ENCODE measurements at regions of chr19 and their contacts with region 1.

Region 1: GRCh38 chr19:6048808-6049405 is 61.4 kb downstream of the RFX2 start:
- DNase-seq: no peak
- H3K4me3 ChIP-seq: no peak overlapping the region
- H3K27ac ChIP-seq: no peak overlapping the region
- H3K27me3 ChIP-seq: no peaks in the 10 kb centered on the region
- CTCF ChIP-seq: peak; percentile 95

Region 2: GRCh38 chr19:5661451-5661873 is 387.4 kb before region 1 on chr19:
- CTCF ChIA-PET with region 1: interaction called, 10 read pairs
- POLR2A ChIA-PET with region 1: no interaction called
- DNase-seq: no peak
- H3K4me3 ChIP-seq: no peak overlapping the region
- H3K27ac ChIP-seq: no peak overlapping the region
- H3K27me3 ChIP-seq: no peaks in the 10 kb centered on the region
- CTCF ChIP-seq: no peak

Region 3: DNA sequence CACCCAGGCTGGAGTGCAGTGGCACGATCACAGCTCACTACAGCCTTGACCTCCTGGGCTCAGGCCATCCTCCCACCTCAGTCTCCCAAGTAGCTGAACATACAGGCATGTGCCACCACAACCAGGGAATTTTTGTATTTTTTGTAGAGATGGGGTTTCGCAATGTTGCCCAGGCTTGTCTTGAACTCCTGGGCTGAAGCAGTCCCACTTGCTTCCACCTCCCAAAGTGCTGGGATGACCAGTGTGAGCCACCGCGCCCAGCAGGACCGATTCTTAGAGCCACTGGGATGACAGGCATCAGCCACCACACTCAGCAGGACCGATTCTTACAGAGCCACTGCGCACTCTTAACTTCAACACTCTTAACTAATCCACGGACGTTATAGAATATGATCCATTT is 16.1 kb before region 1 on chr19:
- CTCF ChIA-PET with region 1: interaction called, 12 read pairs
- POLR2A ChIA-PET with region 1: no interaction called
- DNase-seq: no peak
- H3K4me3 ChIP-seq: no peak overlapping the region
- H3K27ac ChIP-seq: no peak overlapping the region
- H3K27me3 ChIP-seq: no peaks in the 10 kb centered on the region
- CTCF ChIP-seq: no peak

Region 4: DNA sequence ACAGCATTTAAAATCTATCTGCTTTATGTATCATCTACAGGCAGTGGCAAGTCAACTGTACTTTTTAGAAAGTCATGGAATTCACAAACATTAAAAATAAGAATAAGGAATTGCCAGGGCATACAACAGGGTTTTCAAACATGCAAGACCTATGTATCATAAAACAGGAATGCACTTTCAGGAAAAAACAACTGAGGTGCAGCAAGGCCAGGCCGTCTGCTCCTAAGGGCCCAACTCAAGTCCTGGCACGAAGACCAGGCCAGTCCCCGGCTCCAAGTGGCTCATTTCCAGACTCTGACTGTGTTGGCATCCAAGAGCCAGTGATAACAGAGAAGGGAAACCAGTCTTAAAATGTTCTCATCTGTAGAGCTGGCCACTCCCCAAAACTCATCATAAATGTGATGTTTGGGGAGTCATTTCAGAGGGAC is 54.3 kb after region 1 on chr19:
- CTCF ChIA-PET with region 1: interaction called, 10 read pairs
- POLR2A ChIA-PET with region 1: no interaction called
- DNase-seq: peak; percentile 56
- H3K4me3 ChIP-seq: no peak overlapping the region
- H3K27ac ChIP-seq: peak overlapping the region; percentile 13
- H3K27me3 ChIP-seq: no peaks in the 10 kb centered on the region
- CTCF ChIP-seq: no peak

Region 5: GRCh38 chr19:6116749-6117430 is 68.0 kb after region 1 on chr19:
- CTCF ChIA-PET with region 1: interaction called, 16 read pairs
- POLR2A ChIA-PET with region 1: no interaction called
- DNase-seq: no peak
- H3K4me3 ChIP-seq: no peak overlapping the region
- H3K27ac ChIP-seq: no peak overlapping the region
- H3K27me3 ChIP-seq: peaks cover 4% of the 10 kb centered on the region
- CTCF ChIP-seq: no peak

Region 6: GRCh38 chr19:6218491-6219162 is 169.7 kb after region 1 on chr19:
- CTCF ChIA-PET with region 1: interaction called, 19 read pairs
- POLR2A ChIA-PET with region 1: no interaction called
- DNase-seq: no peak
- H3K4me3 ChIP-seq: no peak overlapping the region
- H3K27ac ChIP-seq: peak overlapping the region; percentile 39
- H3K27me3 ChIP-seq: no peaks in the 10 kb centered on the region
- CTCF ChIP-seq: peak; percentile 94

Region 7: GRCh38 chr19:6343462-6343861 is 294.6 kb after region 1 on chr19:
- CTCF ChIA-PET with region 1: interaction called, 11 read pairs
- POLR2A ChIA-PET with region 1: no interaction called
- DNase-seq: no peak
- H3K4me3 ChIP-seq: no peak overlapping the region
- H3K27ac ChIP-seq: no peak overlapping the region
- H3K27me3 ChIP-seq: peaks cover 3% of the 10 kb centered on the region
- CTCF ChIP-seq: no peak

Measured in AG04450 (cell line).